Caco-2 (cell line): ENCODE measurements at regions of chrX and their contacts with region 1.

Region 1: GRCh38 chrX:46209762-46210161 is 335.5 kb downstream of the ZNF674 start:
- DNase-seq: peak; percentile 43 to 55
- H3K4me3 ChIP-seq: no peak overlapping the region
- H3K4me3 Mint-ChIP-seq: peak overlapping the region; percentile 54
- H3K27ac Mint-ChIP-seq: peak overlapping the region; percentile 57
- H3K4me1 ChIP-seq: peaks cover 31% of the 10 kb centered on the region
- H3K4me1 Mint-ChIP-seq: peaks cover 11% of the 10 kb centered on the region
- H3K27me3 ChIP-seq: no peaks in the 10 kb centered on the region
- H3K27me3 Mint-ChIP-seq: no peaks in the 10 kb centered on the region
- CTCF ChIP-seq: no peak

Region 2: DNA sequence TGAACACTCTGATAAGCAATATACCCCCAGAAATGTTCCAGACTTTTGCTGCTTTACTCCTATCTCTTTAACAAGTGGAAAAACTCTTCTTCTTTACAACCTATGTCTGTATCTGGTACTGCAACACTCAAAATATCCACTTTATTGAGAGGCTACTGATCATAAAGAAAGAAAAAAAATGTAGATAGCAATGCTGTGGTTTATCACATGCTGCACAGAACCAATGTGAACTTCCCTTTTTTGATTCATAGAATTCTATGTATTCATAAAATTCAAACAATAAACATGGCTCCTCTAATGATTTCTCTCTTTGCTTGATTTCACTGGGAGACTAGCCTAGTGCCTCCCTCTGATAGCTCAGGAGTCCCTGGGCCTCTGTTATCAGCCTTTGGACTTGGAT is 111.9 kb after region 1 on chrX:
- CTCF ChIA-PET with region 1: no interaction called
- POLR2A ChIA-PET with region 1: no interaction called
- intact Hi-C with region 1: loop called (anchors 1 kb)
- DNase-seq: no peak
- H3K4me3 ChIP-seq: no peak overlapping the region
- H3K4me3 Mint-ChIP-seq: peak overlapping the region; percentile 38
- H3K27ac Mint-ChIP-seq: peak overlapping the region; percentile 93
- H3K4me1 ChIP-seq: peaks cover 77% of the 10 kb centered on the region
- H3K4me1 Mint-ChIP-seq: peaks cover 21% of the 10 kb centered on the region
- H3K27me3 ChIP-seq: no peaks in the 10 kb centered on the region
- H3K27me3 Mint-ChIP-seq: no peaks in the 10 kb centered on the region
- CTCF ChIP-seq: no peak